Endothelial cell of umbilical vein (primary cell): ENCODE measurements at regions of chr16 and their contacts with region 1.

Region 1: GRCh38 chr16:3536271-3536731 is 35.5 kb downstream of the CLUAP1 start:
- DNase-seq: no peak
- H3K4me3 ChIP-seq: no peak overlapping the region
- H3K27ac ChIP-seq: no peak overlapping the region
- H3K4me1 ChIP-seq: no peaks in the 10 kb centered on the region
- H3K27me3 ChIP-seq: no peaks in the 10 kb centered on the region
- CTCF ChIP-seq: no peak
- POLR2A ChIP-seq: no peak

Region 2: GRCh38 chr16:3282730-3283524 is 253.4 kb before region 1 on chr16 and contains the start of gene ZNF263:
- CTCF ChIA-PET with region 1: no interaction called
- POLR2A ChIA-PET with region 1: no interaction called
- dilution Hi-C with region 1: no loop called
- intact Hi-C with region 1: no loop called
- DNase-seq: peak; percentile 98
- H3K4me3 ChIP-seq: peak within 1 kb of the TSS; percentile 74 to 79 (median 77)
- H3K27ac ChIP-seq: peak within 1 kb of the TSS; percentile 92
- H3K4me1 ChIP-seq: peaks cover 13% of the 10 kb centered on the region
- H3K27me3 ChIP-seq: peaks cover 2 to 6% of the 10 kb centered on the region in 2 experiments
- CTCF ChIP-seq: no peak
- POLR2A ChIP-seq: peak; percentile 75
- total RNA-seq, gene ZNF263: 20.8 and 22.7 TPM in 2 replicates

Region 3: GRCh38 chr16:3580689-3581088 is 44.4 kb after region 1 on chr16:
- CTCF ChIA-PET with region 1: no interaction called
- POLR2A ChIA-PET with region 1: no interaction called
- dilution Hi-C with region 1: loop called (anchors 5 kb)
- intact Hi-C with region 1: no loop called
- DNase-seq: no peak
- H3K4me3 ChIP-seq: no peak overlapping the region
- H3K27ac ChIP-seq: no peak overlapping the region
- H3K4me1 ChIP-seq: peaks cover 10% of the 10 kb centered on the region
- H3K27me3 ChIP-seq: no peaks in the 10 kb centered on the region
- CTCF ChIP-seq: no peak
- POLR2A ChIP-seq: no peak

Region 4: GRCh38 chr16:3771502-3771901 is 235.2 kb after region 1 on chr16:
- CTCF ChIA-PET with region 1: no interaction called
- POLR2A ChIA-PET with region 1: no interaction called
- dilution Hi-C with region 1: no loop called
- intact Hi-C with region 1: no loop called
- DNase-seq: no peak
- H3K4me3 ChIP-seq: no peak overlapping the region
- H3K27ac ChIP-seq: no peak overlapping the region
- H3K4me1 ChIP-seq: no peaks in the 10 kb centered on the region
- H3K27me3 ChIP-seq: no peaks in the 10 kb centered on the region
- CTCF ChIP-seq: no peak
- POLR2A ChIP-seq: no peak